Esophagus squamous epithelium (tissue), 5 donors: ENCODE measurements at regions of chr6 and their contacts with region 1.

Region 1: DNA sequence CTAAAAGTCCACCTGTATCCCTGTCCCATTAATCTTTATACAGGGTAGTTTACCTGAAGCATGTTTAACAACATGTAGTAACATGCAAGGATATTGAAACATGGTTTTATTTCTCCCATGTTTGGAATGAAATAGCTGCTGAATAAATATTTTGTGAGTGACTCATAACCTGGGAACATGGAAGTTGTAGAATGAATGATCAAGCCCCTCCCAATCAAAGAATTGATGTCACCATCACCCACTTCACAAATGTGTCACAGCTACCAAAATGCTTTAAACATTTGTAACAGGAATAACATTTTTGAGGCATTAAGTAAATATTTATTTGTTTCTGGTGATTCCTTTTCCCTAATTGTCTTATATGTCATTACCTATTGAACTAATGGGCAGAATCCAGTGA is 58.9 kb upstream of the TNFAIP3 start:
- DNase-seq: no peak
- H3K4me3 ChIP-seq: no peak overlapping the region
- H3K27ac ChIP-seq: no peak overlapping the region
- H3K4me1 ChIP-seq: peaks cover 4 to 57% (median 37%) of the 10 kb centered on the region in 3 donors
- H3K27me3 ChIP-seq: no peaks in the 10 kb centered on the region
- CTCF ChIP-seq: no peak
- POLR2A ChIP-seq: no peak

Region 2: GRCh38 chr6:137866914-137867684 is 58.9 kb after region 1 on chr6 and contains the start of gene TNFAIP3:
- intact Hi-C with region 1: loop called (anchors 5 kb)
- DNase-seq: peak; percentile 88
- H3K4me3 ChIP-seq: peak within 1 kb of the TSS; percentile 63 to 96 (median 88)
- H3K27ac ChIP-seq: peak within 1 kb of the TSS; percentile 92 to 98 (median 96)
- H3K4me1 ChIP-seq: peaks cover 18 to 67% (median 32%) of the 10 kb centered on the region in 3 donors
- H3K27me3 ChIP-seq: no peaks in the 10 kb centered on the region
- CTCF ChIP-seq: peak; percentile 54 to 95 (median 92)
- POLR2A ChIP-seq: peak in 3 of 4 donors; percentile 62 to 96 (median 96)
- total RNA-seq, gene TNFAIP3: 4.2 to 21.7 (median 7.7) TPM

Region 3: GRCh38 chr6:137892271-137892708 is 84.1 kb after region 1 on chr6:
- intact Hi-C with region 1: no loop called
- DNase-seq: no peak
- H3K4me3 ChIP-seq: no peak overlapping the region
- H3K27ac ChIP-seq: no peak overlapping the region
- H3K4me1 ChIP-seq: peaks cover 0 to 15% (median 0%) of the 10 kb centered on the region in 3 donors
- H3K27me3 ChIP-seq: no peaks in the 10 kb centered on the region
- CTCF ChIP-seq: no peak
- POLR2A ChIP-seq: no peak

Region 4: DNA sequence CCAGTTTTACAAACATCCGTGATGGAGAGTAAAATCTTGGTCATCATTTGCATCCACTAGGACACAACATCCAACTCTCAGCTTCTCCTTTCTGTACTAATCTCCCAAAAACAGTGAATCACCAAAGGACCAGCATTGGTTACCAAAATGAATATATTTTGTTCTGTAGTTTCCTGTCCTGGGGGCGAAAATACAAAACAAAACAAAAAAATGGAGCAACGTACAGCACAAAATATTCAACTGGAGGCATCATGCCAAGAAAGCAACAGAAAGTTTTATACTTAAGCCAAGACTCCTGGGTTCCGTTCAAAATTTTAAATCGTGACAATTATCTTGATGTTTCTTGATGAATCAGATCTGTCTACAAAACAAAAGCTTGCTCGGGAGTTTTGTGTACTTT is 838.8 kb after region 1 on chr6:
- intact Hi-C with region 1: no loop called
- DNase-seq: no peak
- H3K4me3 ChIP-seq: peak overlapping the region in 2 of 4 donors; percentile 2 to 33
- H3K27ac ChIP-seq: peak overlapping the region in 2 of 4 donors; percentile 10 to 22
- H3K4me1 ChIP-seq: peaks cover 0 to 35% (median 0%) of the 10 kb centered on the region in 3 donors
- H3K27me3 ChIP-seq: no peaks in the 10 kb centered on the region
- CTCF ChIP-seq: no peak
- POLR2A ChIP-seq: no peak